CD4-positive, alpha-beta memory T cell (primary cell): ENCODE measurements at regions of chr19 and their contacts with region 1.

Region 1: GRCh38 chr19:46840136-46840942 is 10.3 kb downstream of the AP2S1 start:
- DNase-seq: peak; percentile 57 to 63 (median 60)
- H3K4me3 ChIP-seq: no peak overlapping the region
- H3K4me3 Mint-ChIP-seq: no peak overlapping the region
- H3K27ac ChIP-seq: no peak overlapping the region
- H3K27ac Mint-ChIP-seq: peak overlapping the region in 6 of 7 donors; percentile 32 to 56 (median 50)
- H3K4me1 ChIP-seq: peaks cover 3% of the 10 kb centered on the region
- H3K4me1 Mint-ChIP-seq: peaks cover 0 to 4% (median 3%) of the 10 kb centered on the region in 4 donors
- H3K27me3 ChIP-seq: no peaks in the 10 kb centered on the region
- H3K27me3 Mint-ChIP-seq: no peaks in the 10 kb centered on the region

Region 2: GRCh38 chr19:46691104-46691503 is 149.2 kb before region 1 on chr19:
- CTCF ChIA-PET with region 1: no interaction called
- POLR2A ChIA-PET with region 1: no interaction called
- intact Hi-C with region 1: no loop called
- DNase-seq: no peak
- H3K4me3 ChIP-seq: no peak overlapping the region
- H3K4me3 Mint-ChIP-seq: no peak overlapping the region
- H3K27ac ChIP-seq: no peak overlapping the region
- H3K27ac Mint-ChIP-seq: peak overlapping the region in 5 of 7 donors; percentile 29 to 75 (median 43)
- H3K4me1 ChIP-seq: no peaks in the 10 kb centered on the region
- H3K4me1 Mint-ChIP-seq: no peaks in the 10 kb centered on the region
- H3K27me3 ChIP-seq: no peaks in the 10 kb centered on the region
- H3K27me3 Mint-ChIP-seq: no peaks in the 10 kb centered on the region

Region 3: DNA sequence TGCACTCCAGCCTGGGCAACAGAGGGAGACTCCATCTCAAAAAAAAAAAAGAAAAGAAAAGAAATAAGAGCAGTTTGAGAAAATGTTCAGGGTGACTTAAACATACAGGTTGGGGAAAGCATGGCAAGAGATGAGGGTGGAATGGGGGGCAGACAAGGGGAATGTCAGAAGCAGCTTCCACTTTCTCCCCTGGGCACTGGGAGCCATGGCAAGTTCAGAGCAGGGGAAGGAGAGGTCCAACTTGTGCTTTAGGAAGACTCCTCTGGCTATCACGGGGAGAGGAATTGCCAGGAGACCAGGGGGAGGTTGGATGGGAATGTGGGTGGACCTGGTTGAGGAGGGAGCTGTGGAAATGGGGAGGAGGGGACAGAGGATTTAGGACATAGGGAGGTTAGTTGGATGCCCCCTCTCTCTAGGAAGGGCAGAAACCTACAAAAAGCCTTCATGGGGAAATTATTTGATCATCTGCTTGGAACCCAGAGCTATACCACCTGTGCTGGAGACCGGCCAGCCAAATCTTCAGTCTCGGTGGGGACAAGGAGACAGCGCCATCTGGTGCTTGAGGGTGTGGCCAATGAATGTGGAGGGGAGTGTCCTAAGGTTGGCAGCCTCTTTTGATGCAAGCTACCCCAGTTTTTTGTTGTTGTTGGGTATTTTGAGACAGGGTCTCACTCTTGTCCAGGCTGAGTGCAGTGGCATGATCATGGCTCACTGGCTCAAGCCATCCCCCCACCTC is 86.8 kb before region 1 on chr19:
- CTCF ChIA-PET with region 1: interaction called, 335 read pairs
- POLR2A ChIA-PET with region 1: interaction called, 15 read pairs
- intact Hi-C with region 1: loop called (anchors 1 kb)
- DNase-seq: peak; percentile 62 to 80 (median 68)
- H3K4me3 ChIP-seq: no peak overlapping the region
- H3K4me3 Mint-ChIP-seq: no peak overlapping the region
- H3K27ac ChIP-seq: no peak overlapping the region
- H3K27ac Mint-ChIP-seq: peak overlapping the region in 5 of 7 donors; percentile 22 to 73 (median 57)
- H3K4me1 ChIP-seq: no peaks in the 10 kb centered on the region
- H3K4me1 Mint-ChIP-seq: peaks cover 6 to 13% (median 10%) of the 10 kb centered on the region in 4 donors
- H3K27me3 ChIP-seq: no peaks in the 10 kb centered on the region
- H3K27me3 Mint-ChIP-seq: no peaks in the 10 kb centered on the region

Region 4: GRCh38 chr19:46788262-46788967 is 51.9 kb before region 1 on chr19 and contains the start of gene SLC1A5:
- CTCF ChIA-PET with region 1: interaction called, 20 read pairs
- POLR2A ChIA-PET with region 1: interaction called, 4 read pairs
- intact Hi-C with region 1: loop called (anchors 1 kb)
- DNase-seq: peak; percentile 95 to 97 (median 95)
- H3K4me3 ChIP-seq: peak within 1 kb of the TSS; percentile 78 to 90
- H3K4me3 Mint-ChIP-seq: peak within 1 kb of the TSS; percentile 89 to 97 (median 92)
- H3K27ac ChIP-seq: peak within 1 kb of the TSS; percentile 75
- H3K27ac Mint-ChIP-seq: peak within 1 kb of the TSS; percentile 80 to 99 (median 90)
- H3K4me1 ChIP-seq: peaks cover 61% of the 10 kb centered on the region
- H3K4me1 Mint-ChIP-seq: peaks cover 42 to 78% (median 56%) of the 10 kb centered on the region in 4 donors
- H3K27me3 ChIP-seq: no peaks in the 10 kb centered on the region
- H3K27me3 Mint-ChIP-seq: no peaks in the 10 kb centered on the region
- total RNA-seq, gene SLC1A5: 20.3 TPM

Region 5: GRCh38 chr19:46821498-46822409 is 18.6 kb before region 1 on chr19:
- CTCF ChIA-PET with region 1: interaction called, 28 read pairs
- POLR2A ChIA-PET with region 1: interaction called, 3 read pairs
- intact Hi-C with region 1: no loop called
- DNase-seq: peak; percentile 48 to 75 (median 52)
- H3K4me3 ChIP-seq: no peak overlapping the region
- H3K4me3 Mint-ChIP-seq: peak overlapping the region in 6 of 8 donors; percentile 20 to 72 (median 56)
- H3K27ac ChIP-seq: peak overlapping the region; percentile 34
- H3K27ac Mint-ChIP-seq: peak overlapping the region; percentile 73 to 95 (median 92)
- H3K4me1 ChIP-seq: peaks cover 29% of the 10 kb centered on the region
- H3K4me1 Mint-ChIP-seq: peaks cover 15 to 43% (median 31%) of the 10 kb centered on the region in 4 donors
- H3K27me3 ChIP-seq: no peaks in the 10 kb centered on the region
- H3K27me3 Mint-ChIP-seq: no peaks in the 10 kb centered on the region

Region 6: GRCh38 chr19:46850228-46851203 is 10.2 kb after region 1 on chr19 and contains the start of gene AP2S1:
- CTCF ChIA-PET with region 1: interaction called, 16 read pairs
- POLR2A ChIA-PET with region 1: no interaction called
- intact Hi-C with region 1: no loop called
- DNase-seq: peak; percentile 93 to 99 (median 95)
- H3K4me3 ChIP-seq: peak within 1 kb of the TSS; percentile 62 to 86
- H3K4me3 Mint-ChIP-seq: peak within 1 kb of the TSS; percentile 78 to 97 (median 94)
- H3K27ac ChIP-seq: peak within 1 kb of the TSS; percentile 85
- H3K27ac Mint-ChIP-seq: peak within 1 kb of the TSS; percentile 62 to 96 (median 93)
- H3K4me1 ChIP-seq: peaks cover 13% of the 10 kb centered on the region
- H3K4me1 Mint-ChIP-seq: peaks cover 19 to 33% (median 24%) of the 10 kb centered on the region in 4 donors
- H3K27me3 ChIP-seq: no peaks in the 10 kb centered on the region
- H3K27me3 Mint-ChIP-seq: no peaks in the 10 kb centered on the region
- total RNA-seq, gene AP2S1: 40.7 to 42.1 TPM

Region 7: DNA sequence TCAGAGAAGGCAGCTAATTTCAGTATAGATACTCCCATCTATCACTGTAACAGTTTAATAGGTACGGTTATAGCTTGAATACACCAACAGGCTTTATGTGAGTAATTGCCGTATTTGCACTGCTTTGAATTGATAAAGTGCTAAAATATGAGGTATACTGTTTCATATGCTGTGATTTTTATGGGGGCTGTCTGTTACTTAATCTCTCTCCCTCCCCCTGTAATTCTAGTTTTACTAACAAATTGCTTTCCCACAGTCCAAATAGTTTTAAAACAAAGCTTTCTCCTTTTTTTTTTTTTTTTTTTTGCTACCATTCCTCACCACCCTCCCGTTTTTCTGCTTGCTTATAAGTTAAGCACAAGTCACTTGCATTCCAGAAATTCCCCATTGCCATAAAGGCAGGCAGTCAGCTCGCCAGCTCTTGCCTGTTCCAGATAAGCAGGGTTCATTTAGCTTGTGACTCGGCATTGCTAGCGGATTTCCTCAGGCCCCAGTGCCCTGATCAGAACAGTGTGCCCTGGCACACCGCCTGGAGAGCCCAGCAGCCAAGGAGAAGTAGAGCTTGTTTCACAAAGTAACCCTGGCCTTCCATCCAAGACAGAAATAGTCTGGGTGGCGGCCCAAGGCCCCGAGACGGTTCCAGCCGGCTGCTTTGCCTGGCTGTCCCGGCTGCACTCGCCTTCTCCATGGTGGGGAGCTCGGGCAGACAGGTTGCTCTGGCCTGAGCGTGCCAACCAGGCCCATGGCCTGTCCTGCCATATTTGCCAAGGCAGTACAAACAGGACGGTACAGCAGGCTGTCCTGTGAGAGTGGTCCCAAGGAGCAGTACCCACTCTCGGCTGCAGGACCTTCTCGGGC is 135.8 kb after region 1 on chr19:
- CTCF ChIA-PET with region 1: no interaction called
- POLR2A ChIA-PET with region 1: no interaction called
- intact Hi-C with region 1: no loop called
- DNase-seq: no peak
- H3K4me3 ChIP-seq: no peak overlapping the region
- H3K4me3 Mint-ChIP-seq: no peak overlapping the region
- H3K27ac ChIP-seq: no peak overlapping the region
- H3K27ac Mint-ChIP-seq: peak overlapping the region in 1 of 7 donors; percentile 75
- H3K4me1 ChIP-seq: peaks cover 25% of the 10 kb centered on the region
- H3K4me1 Mint-ChIP-seq: peaks cover 22 to 42% (median 34%) of the 10 kb centered on the region in 4 donors
- H3K27me3 ChIP-seq: no peaks in the 10 kb centered on the region
- H3K27me3 Mint-ChIP-seq: no peaks in the 10 kb centered on the region